Mammary epithelial cell (primary cell): ENCODE measurements at regions of chr1 and their contacts with region 1.

Region 1: GRCh38 chr1:88851303-88852063 is 39.9 kb downstream of the GTF2B start:
- DNase-seq: no peak
- H3K4me3 ChIP-seq: no peak overlapping the region
- H3K27ac ChIP-seq: no peak overlapping the region
- H3K4me1 ChIP-seq: no peaks in the 10 kb centered on the region
- H3K27me3 ChIP-seq: no peaks in the 10 kb centered on the region
- CTCF ChIP-seq: no peak

Region 2: GRCh38 chr1:88800382-88801051 is 51.0 kb before region 1 on chr1:
- CTCF ChIA-PET with region 1: no interaction called
- dilution Hi-C with region 1: loop called (anchors 5 kb)
- in situ Hi-C with region 1: no loop called
- intact Hi-C with region 1: loop called (anchors 10 kb)
- DNase-seq: no peak
- H3K4me3 ChIP-seq: no peak overlapping the region
- H3K27ac ChIP-seq: no peak overlapping the region
- H3K4me1 ChIP-seq: peaks cover 12% of the 10 kb centered on the region
- H3K27me3 ChIP-seq: no peaks in the 10 kb centered on the region
- CTCF ChIP-seq: peak; percentile 37 to 56

Region 3: GRCh38 chr1:89142160-89142559 is 290.7 kb after region 1 on chr1:
- CTCF ChIA-PET with region 1: no interaction called
- dilution Hi-C with region 1: no loop called
- in situ Hi-C with region 1: no loop called
- intact Hi-C with region 1: no loop called
- DNase-seq: no peak
- H3K4me3 ChIP-seq: no peak overlapping the region
- H3K27ac ChIP-seq: no peak overlapping the region
- H3K4me1 ChIP-seq: no peaks in the 10 kb centered on the region
- H3K27me3 ChIP-seq: peaks cover 3% of the 10 kb centered on the region
- CTCF ChIP-seq: no peak

Region 4: GRCh38 chr1:89589515-89589914 is 738.0 kb after region 1 on chr1:
- CTCF ChIA-PET with region 1: no interaction called
- dilution Hi-C with region 1: no loop called
- in situ Hi-C with region 1: no loop called
- intact Hi-C with region 1: no loop called
- DNase-seq: no peak
- H3K4me3 ChIP-seq: no peak overlapping the region
- H3K27ac ChIP-seq: no peak overlapping the region
- H3K4me1 ChIP-seq: no peaks in the 10 kb centered on the region
- H3K27me3 ChIP-seq: no peaks in the 10 kb centered on the region
- CTCF ChIP-seq: no peak